Left lung (tissue), 14 donors: ENCODE measurements at regions of chr5 and their contacts with region 1.

Region 1: DNA sequence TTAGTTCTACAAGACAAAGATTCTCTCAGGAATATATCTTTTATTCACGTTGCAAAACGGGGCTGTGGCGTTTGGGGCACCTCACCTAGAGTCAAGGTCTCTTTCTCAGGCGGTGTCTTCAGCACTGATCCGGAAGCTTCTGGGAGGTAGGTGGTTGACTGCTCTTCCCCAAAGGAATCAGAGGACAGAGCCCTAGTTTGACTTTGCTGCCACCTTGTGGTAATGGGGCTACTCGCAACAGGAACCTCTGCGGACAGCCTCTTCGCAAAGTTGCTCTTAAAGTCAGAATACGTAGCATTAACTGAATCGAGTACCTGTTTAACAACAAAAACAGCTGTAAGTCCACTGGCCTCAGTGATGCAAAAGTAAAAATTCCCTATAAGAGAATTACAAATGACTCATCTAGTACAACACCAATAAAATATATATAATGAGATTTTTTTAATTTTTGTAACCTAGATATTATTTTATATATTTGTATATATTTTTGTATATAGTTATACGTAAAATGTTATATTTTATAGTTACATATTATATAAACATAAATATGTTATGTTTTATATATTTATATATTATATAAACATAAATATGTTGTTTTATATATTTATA is 13.3 kb upstream of the GPX8 start:
- DNase-seq: peak in 3 of 4 donors; percentile 67 to 83 (median 72)
- ATAC-seq: peak; percentile 99
- H3K4me3 ChIP-seq: no peak overlapping the region
- H3K27ac ChIP-seq: no peak overlapping the region
- H3K4me1 ChIP-seq: peaks cover 0 to 5% of the 10 kb centered on the region in 2 donors
- H3K27me3 ChIP-seq: peaks cover 0 to 20% of the 10 kb centered on the region in 2 donors
- CTCF ChIP-seq: peak; percentile 85 to 91

Region 2: DNA sequence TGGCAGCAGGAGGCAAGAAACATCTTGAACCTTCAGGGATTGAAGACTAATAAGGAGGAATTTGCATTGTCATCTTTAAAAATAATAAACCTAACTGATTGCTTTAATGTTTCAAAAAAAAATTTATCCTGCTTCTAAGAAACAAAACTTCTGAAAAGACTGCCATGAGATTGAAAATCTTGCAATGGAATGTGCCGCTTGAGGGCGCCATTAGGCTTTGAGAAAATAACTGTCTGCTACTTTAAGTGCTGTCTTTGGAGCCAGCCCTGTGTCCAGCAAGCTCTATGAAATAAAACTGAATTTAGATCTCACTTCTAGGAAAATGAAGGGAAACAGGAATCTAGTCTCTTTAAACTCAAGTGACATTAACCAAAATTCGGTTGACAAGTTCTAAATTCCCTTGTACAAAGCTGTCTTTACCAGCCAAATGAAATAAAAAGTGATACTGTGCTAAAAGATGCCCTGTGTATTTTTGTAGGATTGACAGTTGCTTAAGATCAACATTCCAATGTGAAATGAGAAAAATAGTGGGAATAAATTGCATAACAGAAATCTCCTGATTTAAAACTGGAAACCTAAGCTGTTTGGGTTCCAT is 240.6 kb before region 1 on chr5:
- intact Hi-C with region 1: loop called in 1 of 2 experiments (anchors 10 kb)
- DNase-seq: peak in 2 of 4 donors; percentile 51 to 61
- ATAC-seq: peak; percentile 49
- H3K4me3 ChIP-seq: no peak overlapping the region
- H3K27ac ChIP-seq: no peak overlapping the region
- H3K4me1 ChIP-seq: peaks cover 0 to 11% of the 10 kb centered on the region in 2 donors
- H3K27me3 ChIP-seq: no peaks in the 10 kb centered on the region
- CTCF ChIP-seq: peak; percentile 43 to 54